Testis (tissue), 5 donors: ENCODE measurements at regions of chr6 and their contacts with region 1.

Region 1: DNA sequence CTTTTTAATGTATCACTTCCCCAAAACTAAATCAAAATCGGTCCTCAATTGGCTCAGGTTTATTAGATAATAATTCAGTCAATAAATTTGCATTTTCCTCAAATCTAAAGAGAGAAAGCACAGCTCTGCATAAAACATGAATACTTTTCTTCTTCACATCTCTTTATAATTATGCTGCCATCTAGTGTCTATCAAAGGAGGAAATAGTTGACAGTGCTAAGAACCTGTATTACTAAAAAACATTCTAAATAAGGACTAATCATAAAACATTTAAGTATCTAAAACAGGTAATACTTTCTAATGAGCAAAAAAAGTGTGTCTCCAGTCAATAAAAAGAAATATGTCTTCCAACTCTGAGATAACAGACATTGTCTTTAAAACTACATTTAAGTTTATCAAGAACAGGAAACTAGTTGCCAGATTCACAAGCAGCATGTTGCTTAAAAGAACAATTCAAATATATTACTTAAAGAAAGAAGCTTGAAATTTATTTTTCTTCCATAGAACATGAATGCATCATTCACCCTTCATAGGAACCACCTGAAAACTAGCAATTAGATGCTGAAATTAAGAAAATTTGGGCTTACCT is 56.5 kb upstream of the DST start:
- DNase-seq: no peak
- H3K4me3 ChIP-seq: no peak overlapping the region
- H3K27ac ChIP-seq: no peak overlapping the region
- H3K4me1 ChIP-seq: no peaks in the 10 kb centered on the region
- H3K27me3 ChIP-seq: no peaks in the 10 kb centered on the region
- CTCF ChIP-seq: peak in 1 of 3 experiments; percentile 52
- POLR2A ChIP-seq: no peak

Region 2: DNA sequence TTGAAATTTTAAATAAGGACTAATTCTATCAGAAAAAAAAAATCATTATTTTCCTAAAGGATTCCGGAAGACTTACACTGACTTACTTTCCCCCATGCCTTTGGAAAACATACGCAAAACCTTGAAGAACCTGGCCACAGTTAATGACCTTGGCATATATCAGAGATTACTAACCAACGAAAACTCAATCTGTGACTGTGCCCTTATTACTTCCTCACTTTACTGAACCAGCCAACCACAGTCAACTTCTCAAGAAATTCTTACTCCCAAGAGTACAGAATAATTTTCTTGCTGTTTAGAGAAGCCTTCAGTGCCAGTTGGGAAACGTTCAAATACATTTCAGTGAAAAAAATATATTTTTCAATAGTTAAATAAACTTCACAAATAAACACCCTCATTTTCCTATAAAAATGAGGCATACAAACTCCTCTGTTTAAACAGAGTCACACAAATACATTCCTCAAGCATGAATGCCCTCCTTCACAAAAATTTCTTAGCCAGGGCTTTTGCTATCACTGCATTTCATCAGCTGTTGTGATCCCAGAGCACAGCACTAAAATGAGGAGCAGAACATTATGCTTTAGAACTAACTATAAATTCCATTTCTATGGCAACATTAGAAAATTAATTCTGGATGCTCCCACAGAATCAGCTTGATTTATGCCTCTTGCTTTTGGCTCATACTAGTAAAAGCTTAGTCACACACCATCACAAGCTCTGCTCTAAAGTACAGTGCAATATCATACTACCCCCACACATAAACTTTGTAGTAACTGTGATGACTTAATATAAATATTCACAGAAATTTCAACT is 174.1 kb before region 1 on chr6:
- intact Hi-C with region 1: no loop called
- DNase-seq: no peak
- H3K4me3 ChIP-seq: no peak overlapping the region
- H3K27ac ChIP-seq: peak overlapping the region; percentile 26 to 42
- H3K4me1 ChIP-seq: peaks cover 21% of the 10 kb centered on the region
- H3K27me3 ChIP-seq: no peaks in the 10 kb centered on the region
- CTCF ChIP-seq: no peak
- POLR2A ChIP-seq: no peak

Region 3: GRCh38 chr6:56642366-56643261 is 56.5 kb before region 1 on chr6 and contains the start of gene DST:
- intact Hi-C with region 1: loop called (anchors 10 kb)
- DNase-seq: no peak
- H3K4me3 ChIP-seq: no peak within 1 kb of the TSS
- H3K27ac ChIP-seq: no peak within 1 kb of the TSS
- H3K4me1 ChIP-seq: no peaks in the 10 kb centered on the region
- H3K27me3 ChIP-seq: no peaks in the 10 kb centered on the region
- CTCF ChIP-seq: no peak
- POLR2A ChIP-seq: no peak
- total RNA-seq, gene DST: 175 to 221 TPM